Naive thymus-derived CD4-positive, alpha-beta T cell (primary cell): ENCODE measurements at regions of chr13 and their contacts with region 1.

Region 1: DNA sequence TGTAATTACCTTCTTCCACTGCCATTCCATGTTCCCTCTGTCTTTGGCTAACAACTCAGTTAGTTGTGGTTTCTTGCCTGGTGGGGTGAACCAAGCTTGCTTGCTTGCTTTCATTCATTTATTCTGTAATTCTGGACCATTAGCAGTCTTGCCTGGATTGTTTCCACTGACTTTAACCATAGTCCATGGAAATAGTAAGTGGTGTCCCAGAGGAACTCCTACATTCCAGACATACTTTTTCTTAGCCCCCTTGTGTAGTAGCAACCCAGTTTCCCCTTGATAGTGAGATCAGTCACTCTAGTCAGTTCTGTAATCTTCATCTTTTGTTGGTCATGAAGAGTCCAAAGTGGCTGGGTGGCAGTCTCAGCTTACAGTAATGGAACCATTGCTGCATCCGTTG is 23.2 kb downstream of the PDS5B start:
- DNase-seq: no peak
- ATAC-seq: no peak
- H3K4me3 ChIP-seq: no peak overlapping the region
- H3K4me3 Mint-ChIP-seq: no peak overlapping the region
- H3K27ac ChIP-seq: no peak overlapping the region
- H3K27ac Mint-ChIP-seq: no peak overlapping the region
- H3K4me1 ChIP-seq: no peaks in the 10 kb centered on the region
- H3K4me1 Mint-ChIP-seq: peaks cover 4 to 72% (median 54%) of the 10 kb centered on the region in 7 donors
- H3K27me3 ChIP-seq: no peaks in the 10 kb centered on the region
- H3K27me3 Mint-ChIP-seq: no peaks in the 10 kb centered on the region

Region 2: DNA sequence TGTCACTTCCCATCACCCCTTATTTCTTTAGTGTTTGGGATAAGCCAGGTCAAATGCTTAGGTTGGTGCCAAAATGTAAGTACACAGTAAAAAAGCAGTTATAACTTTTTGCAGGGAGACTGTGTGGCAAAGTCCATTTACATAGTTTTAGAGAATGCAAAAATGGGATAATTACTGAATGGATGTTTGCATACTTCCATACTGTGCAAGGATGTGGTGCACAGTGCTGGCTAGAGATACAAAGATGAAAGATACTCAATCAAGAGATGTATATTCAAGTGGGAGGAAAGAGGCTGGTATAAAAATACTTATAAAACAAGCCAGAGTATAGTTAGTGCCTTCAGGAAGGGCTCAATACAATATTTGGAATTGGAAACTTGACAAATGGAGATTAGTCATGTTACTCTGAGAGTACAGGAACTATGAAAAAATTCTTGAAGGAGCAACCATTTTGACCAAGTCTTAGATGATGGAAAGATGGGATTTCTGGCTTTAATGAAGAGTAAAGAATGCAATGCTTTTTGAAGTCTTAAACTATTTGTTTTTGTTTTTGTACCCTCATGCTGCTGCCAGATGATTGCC is 15.2 kb before region 1 on chr13:
- CTCF ChIA-PET with region 1: no interaction called
- POLR2A ChIA-PET with region 1: no interaction called
- intact Hi-C with region 1: loop called in 1 of 2 experiments (anchors 2 kb)
- DNase-seq: no peak
- ATAC-seq: no peak
- H3K4me3 ChIP-seq: no peak overlapping the region
- H3K4me3 Mint-ChIP-seq: peak overlapping the region in 1 of 10 donors; percentile 21
- H3K27ac ChIP-seq: no peak overlapping the region
- H3K27ac Mint-ChIP-seq: peak overlapping the region in 3 of 9 donors; percentile 14 to 26 (median 16)
- H3K4me1 ChIP-seq: peaks cover 4 to 5% of the 10 kb centered on the region in 2 donors
- H3K4me1 Mint-ChIP-seq: peaks cover 49 to 73% (median 65%) of the 10 kb centered on the region in 7 donors
- H3K27me3 ChIP-seq: no peaks in the 10 kb centered on the region
- H3K27me3 Mint-ChIP-seq: no peaks in the 10 kb centered on the region

Region 3: GRCh38 chr13:32627793-32628192 is 18.4 kb after region 1 on chr13:
- CTCF ChIA-PET with region 1: no interaction called
- POLR2A ChIA-PET with region 1: no interaction called
- intact Hi-C with region 1: loop called in 1 of 2 experiments (anchors 2 kb)
- DNase-seq: no peak
- ATAC-seq: no peak
- H3K4me3 ChIP-seq: no peak overlapping the region
- H3K4me3 Mint-ChIP-seq: no peak overlapping the region
- H3K27ac ChIP-seq: no peak overlapping the region
- H3K27ac Mint-ChIP-seq: no peak overlapping the region
- H3K4me1 ChIP-seq: no peaks in the 10 kb centered on the region
- H3K4me1 Mint-ChIP-seq: peaks cover 26 to 81% (median 60%) of the 10 kb centered on the region in 7 donors
- H3K27me3 ChIP-seq: no peaks in the 10 kb centered on the region
- H3K27me3 Mint-ChIP-seq: no peaks in the 10 kb centered on the region